ENCODE measurements at regions of chr11 and their contacts with region 1.

Region 1: GRCh38 chr11:47373876-47374720 is 4.2 kb downstream of the SPI1 start:
- DNase-seq: peak; percentile 95

Region 2: GRCh38 chr11:47411884-47412746 is 38.0 kb after region 1 on chr11:
- intact Hi-C with region 1: loop called in 1 of 2 experiments (anchors 5 kb)
- DNase-seq: no peak

Region 3: GRCh38 chr11:47448566-47449427 is 74.7 kb after region 1 on chr11 and contains the start of gene RAPSN:
- intact Hi-C with region 1: loop called (anchors 5 to 10 kb)
- DNase-seq: no peak
- total RNA-seq, gene RAPSN: 0.33 to 0.69 TPM

Region 4: DNA sequence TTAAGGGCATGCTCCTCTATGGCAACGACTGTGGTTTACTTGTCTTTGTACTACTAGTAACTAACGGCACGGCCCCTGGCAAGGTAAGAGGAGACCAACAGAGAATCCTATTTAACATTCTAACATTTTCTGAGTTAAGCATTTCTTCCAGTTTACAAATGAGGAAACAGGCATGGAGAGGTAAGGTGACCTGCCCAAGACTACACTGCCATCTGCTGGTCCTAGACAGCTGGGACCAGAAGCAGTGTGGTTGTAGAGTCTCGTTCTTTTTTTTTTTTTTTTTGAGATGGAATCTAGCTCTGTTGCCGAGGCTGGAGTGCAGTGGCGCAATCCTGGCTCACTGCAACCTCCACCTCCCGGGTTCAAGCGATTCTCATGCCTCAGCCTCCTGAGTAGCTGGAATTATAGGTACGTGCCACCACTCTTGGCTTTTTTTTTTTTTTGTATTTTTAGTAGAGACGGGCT is 80.1 kb after region 1 on chr11:
- intact Hi-C with region 1: loop called (anchors 5 to 10 kb)
- DNase-seq: peak; percentile 91